GM10248 (cell line): ENCODE measurements at regions of chr19 and their contacts with region 1.

Region 1: GRCh38 chr19:35716801-35717666 is 769 bp upstream of the KMT2B start:
- DNase-seq: peak; percentile 78
- CTCF ChIP-seq: peak; percentile 78

Region 2: DNA sequence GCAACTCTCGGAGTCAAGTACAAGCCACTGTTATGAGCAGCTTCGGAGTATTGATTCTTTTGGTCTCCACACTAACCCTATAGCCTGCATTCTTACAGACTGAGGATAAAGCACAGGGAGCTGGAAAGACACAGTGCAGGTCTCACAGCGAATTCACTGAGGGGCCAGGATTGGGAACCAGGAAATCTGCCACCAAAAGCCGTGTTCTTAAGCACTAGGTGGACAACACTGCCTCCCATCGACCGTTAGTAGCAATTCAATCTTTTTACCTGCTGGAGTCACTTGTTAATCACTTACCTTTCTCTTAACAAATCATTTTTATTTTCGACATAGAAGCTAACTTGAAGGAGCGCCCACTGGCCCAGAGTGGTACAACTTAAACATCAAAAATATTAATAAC is 124.8 kb before region 1 on chr19:
- CTCF ChIA-PET with region 1: no interaction called
- POLR2A ChIA-PET with region 1: no interaction called
- DNase-seq: peak; percentile 66
- CTCF ChIP-seq: peak; percentile 53

Region 3: GRCh38 chr19:35702223-35703012 is 14.6 kb before region 1 on chr19:
- CTCF ChIA-PET with region 1: interaction called, 184 read pairs
- POLR2A ChIA-PET with region 1: interaction called, 42 read pairs
- DNase-seq: peak; percentile 95
- CTCF ChIP-seq: no peak